ENCODE measurements at regions of chr19 and their contacts with region 1.

Region 1: DNA sequence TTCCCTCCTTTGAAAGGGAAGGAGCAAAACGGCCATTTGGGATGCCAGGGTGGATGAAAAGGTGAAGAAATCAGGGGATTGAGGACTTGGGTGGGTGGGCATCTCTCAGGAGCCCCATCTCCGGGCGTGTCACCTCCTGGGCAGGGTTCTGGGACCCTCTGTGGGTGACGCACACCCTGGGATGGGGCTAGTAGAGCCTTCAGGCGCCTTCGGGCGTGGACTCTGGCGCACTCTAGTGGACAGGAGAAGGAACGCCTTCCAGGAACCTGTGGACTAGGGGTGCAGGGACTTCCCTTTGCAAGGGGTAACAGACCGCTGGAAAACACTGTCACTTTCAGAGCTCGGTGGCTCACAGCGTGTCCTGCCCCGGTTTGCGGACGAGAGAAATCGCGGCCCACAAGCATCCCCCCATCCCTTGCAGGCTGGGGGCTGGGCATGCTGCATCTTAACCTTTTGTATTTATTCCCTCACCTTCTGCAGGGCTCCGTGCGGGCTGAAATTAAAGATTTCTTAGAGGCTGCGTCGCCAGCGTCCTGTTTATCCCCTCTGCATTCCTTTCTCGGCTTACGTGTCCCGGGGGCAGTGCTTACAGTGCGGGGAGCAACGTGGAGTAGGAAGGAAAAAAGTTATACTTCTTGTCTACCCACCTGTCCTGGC is 15.2 kb upstream of the S1PR4 start:
- DNase-seq: peak; percentile 46
- ATAC-seq: peak; percentile 95
- H3K4me3 ChIP-seq: peak overlapping the region in 1 of 3 experiments; percentile 39; a peak in 1 of 6 replicates
- H3K27ac ChIP-seq: no peak overlapping the region
- H3K4me1 ChIP-seq: no peaks in the 10 kb centered on the region
- H3K27me3 ChIP-seq: no peaks in the 10 kb centered on the region
- CTCF ChIP-seq: peak; percentile 94
- EP300 ChIP-seq: no peak
- POLR2A ChIP-seq: no peak
- RAD21 ChIP-seq: peak; percentile 84

Region 2: GRCh38 chr19:3125900-3126524 is 37.3 kb before region 1 on chr19:
- CTCF ChIA-PET with region 1: interaction called, 26 read pairs
- POLR2A ChIA-PET with region 1: interaction called, 4 read pairs
- in situ Hi-C with region 1: no loop called
- intact Hi-C with region 1: loop called (anchors 1 kb)
- DNase-seq: peak; percentile 43
- ATAC-seq: peak; percentile 86
- H3K4me3 ChIP-seq: no peak overlapping the region
- H3K27ac ChIP-seq: no peak overlapping the region
- H3K4me1 ChIP-seq: no peaks in the 10 kb centered on the region
- H3K27me3 ChIP-seq: no peaks in the 10 kb centered on the region
- CTCF ChIP-seq: peak; percentile 95
- EP300 ChIP-seq: no peak
- POLR2A ChIP-seq: no peak
- RAD21 ChIP-seq: peak; percentile 33; the same call in 1 of the 2 replicates

Region 3: GRCh38 chr19:3146677-3147100 is 16.7 kb before region 1 on chr19:
- CTCF ChIA-PET with region 1: interaction called, 10 read pairs
- POLR2A ChIA-PET with region 1: no interaction called
- in situ Hi-C with region 1: no loop called
- intact Hi-C with region 1: no loop called
- DNase-seq: peak; percentile 21
- ATAC-seq: peak; percentile 71
- H3K4me3 ChIP-seq: no peak overlapping the region
- H3K27ac ChIP-seq: no peak overlapping the region
- H3K4me1 ChIP-seq: no peaks in the 10 kb centered on the region
- H3K27me3 ChIP-seq: peaks cover 5 to 12% of the 10 kb centered on the region in 2 experiments; a peak in 3 of 5 replicates
- CTCF ChIP-seq: peak; percentile 76
- EP300 ChIP-seq: no peak
- POLR2A ChIP-seq: no peak
- RAD21 ChIP-seq: no peak

Measured in HepG2 (cell line).